CD8-positive, alpha-beta T cell (primary cell): ENCODE measurements at regions of chr11 and their contacts with region 1.

Region 1: DNA sequence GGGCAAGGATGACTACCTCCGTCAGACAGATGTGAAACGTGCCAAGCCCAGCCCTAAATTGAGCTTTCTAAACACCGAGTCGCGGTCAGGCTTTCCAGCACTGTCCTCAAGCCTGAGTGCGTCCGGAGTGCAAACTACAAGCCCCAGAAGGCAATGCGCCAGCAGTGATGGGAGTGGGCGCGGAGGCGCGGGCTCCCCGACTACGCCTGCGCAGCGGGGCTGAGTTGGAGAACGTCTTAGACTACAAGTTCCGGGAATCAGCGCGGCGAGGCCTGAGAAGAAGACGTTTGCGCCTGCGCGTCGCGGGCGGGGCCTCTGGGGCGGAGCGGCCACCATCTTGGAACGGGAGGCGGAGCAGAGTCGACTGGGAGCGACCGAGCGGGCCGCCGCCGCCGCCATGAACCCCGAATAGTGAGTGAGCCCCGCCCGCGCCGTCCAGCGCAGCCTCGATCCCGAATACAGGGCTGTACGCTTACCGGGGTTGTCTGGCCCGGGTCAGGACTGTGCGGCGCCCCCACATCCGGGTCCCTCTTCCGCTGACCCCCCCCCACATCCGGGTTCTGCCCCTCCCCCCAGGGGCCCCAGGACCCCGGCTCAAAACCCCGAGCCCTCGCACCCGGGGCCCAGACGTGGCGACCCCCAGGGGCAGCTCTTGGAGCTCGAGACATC is at the start of gene RAB1B:
- DNase-seq: peak; percentile 99 to 100 (median 100)
- ATAC-seq: peak; percentile 75
- H3K4me3 ChIP-seq: peak within 1 kb of the TSS; percentile 89 to 97
- H3K4me3 Mint-ChIP-seq: peak within 1 kb of the TSS; percentile 97
- H3K27ac ChIP-seq: peak within 1 kb of the TSS; percentile 83 to 91
- H3K27ac Mint-ChIP-seq: peak within 1 kb of the TSS; percentile 97
- H3K4me1 ChIP-seq: peaks cover 43% of the 10 kb centered on the region
- H3K4me1 Mint-ChIP-seq: peaks cover 50% of the 10 kb centered on the region
- H3K27me3 ChIP-seq: no peaks in the 10 kb centered on the region
- H3K27me3 Mint-ChIP-seq: no peaks in the 10 kb centered on the region
- CTCF ChIP-seq: no peak
- total RNA-seq, gene RAB1B: 34.4 to 36.3 TPM

Region 2: DNA sequence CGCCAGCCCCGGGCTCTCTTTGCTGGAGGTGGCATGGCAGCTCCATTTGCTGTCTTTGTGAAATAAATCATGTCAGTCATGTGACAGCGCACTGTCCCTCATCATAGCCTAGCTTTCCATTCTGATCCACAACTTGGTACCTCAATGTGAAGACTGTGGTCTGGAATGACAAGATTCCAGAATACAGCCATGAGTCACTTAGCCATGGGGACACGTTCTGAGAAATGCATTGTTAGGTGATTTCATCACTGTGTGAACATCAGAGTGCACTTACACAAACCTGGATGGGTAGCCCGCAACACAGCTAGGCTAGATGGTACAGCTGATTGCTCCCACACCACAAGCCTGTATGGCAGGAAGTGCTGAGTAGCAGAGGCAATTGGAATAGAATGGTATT is 1882.1 kb before region 1 on chr11:
- CTCF ChIA-PET with region 1: no interaction called
- POLR2A ChIA-PET with region 1: no interaction called
- intact Hi-C with region 1: no loop called
- DNase-seq: peak in 1 of 9 experiments; percentile 43
- ATAC-seq: peak; percentile 80
- H3K4me3 ChIP-seq: no peak overlapping the region
- H3K4me3 Mint-ChIP-seq: no peak overlapping the region
- H3K27ac ChIP-seq: no peak overlapping the region
- H3K27ac Mint-ChIP-seq: no peak overlapping the region
- H3K4me1 ChIP-seq: peaks cover 6% of the 10 kb centered on the region
- H3K4me1 Mint-ChIP-seq: peaks cover 31% of the 10 kb centered on the region
- H3K27me3 ChIP-seq: no peaks in the 10 kb centered on the region
- H3K27me3 Mint-ChIP-seq: no peaks in the 10 kb centered on the region
- CTCF ChIP-seq: no peak

Region 3: DNA sequence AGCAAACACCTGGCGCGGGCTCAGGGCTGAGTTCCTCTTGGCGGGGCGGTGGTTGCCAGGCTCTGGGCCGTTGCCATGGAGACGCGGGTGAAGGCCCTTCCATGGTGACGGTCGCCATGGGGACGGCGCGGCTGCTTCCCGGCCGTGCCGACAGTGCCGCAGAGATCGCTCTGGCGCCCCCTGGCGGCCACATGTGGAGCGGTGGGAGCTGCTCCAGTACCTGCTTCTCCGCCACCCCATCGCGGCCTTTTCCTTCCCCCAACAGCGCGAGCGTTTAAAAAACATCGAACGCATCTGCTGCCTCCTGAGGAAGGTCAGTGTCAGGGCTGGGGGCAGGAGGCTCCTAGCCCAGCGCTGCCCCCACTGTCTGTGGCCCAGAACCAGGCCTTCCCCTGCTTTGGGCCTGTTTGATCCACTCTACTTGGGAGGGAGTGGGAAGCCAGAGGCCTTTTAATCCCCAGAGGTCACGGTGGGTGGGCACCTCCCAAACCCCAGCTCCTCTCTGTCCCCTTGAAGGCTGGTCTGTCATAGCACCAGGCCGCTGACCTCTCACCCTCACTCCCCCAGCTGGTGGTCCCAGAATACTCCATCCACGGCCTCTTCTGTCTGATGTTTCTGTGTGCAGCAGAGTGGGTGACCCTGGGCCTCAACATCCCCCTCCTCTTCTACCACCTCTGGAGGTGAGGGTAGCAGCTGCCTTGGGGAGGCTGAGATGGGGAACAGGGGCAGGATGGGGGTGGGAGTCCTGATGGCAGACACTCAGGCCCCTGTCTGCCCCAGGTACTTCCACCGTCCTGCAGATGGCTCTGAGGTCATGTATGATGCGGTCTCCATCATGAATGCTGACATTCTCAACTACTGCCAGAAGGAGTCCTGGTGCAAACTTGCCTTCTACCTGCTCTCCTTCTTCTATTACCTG is 14.3 kb after region 1 on chr11:
- CTCF ChIA-PET with region 1: interaction called, 23 read pairs
- POLR2A ChIA-PET with region 1: interaction called, 15 read pairs
- intact Hi-C with region 1: loop called (anchors 1 kb)
- DNase-seq: peak; percentile 98 to 100 (median 99)
- ATAC-seq: peak; percentile 73
- H3K4me3 ChIP-seq: no peak overlapping the region
- H3K4me3 Mint-ChIP-seq: no peak overlapping the region
- H3K27ac ChIP-seq: peak overlapping the region in 1 of 2 experiments; percentile 59
- H3K27ac Mint-ChIP-seq: peak overlapping the region; percentile 84
- H3K4me1 ChIP-seq: peaks cover 27% of the 10 kb centered on the region
- H3K4me1 Mint-ChIP-seq: peaks cover 45% of the 10 kb centered on the region
- H3K27me3 ChIP-seq: peaks cover 0 to 5% of the 10 kb centered on the region in 2 experiments
- H3K27me3 Mint-ChIP-seq: no peaks in the 10 kb centered on the region
- CTCF ChIP-seq: peak; percentile 89

Region 4: GRCh38 chr11:66288671-66289547 is 20.5 kb after region 1 on chr11 and contains the start of gene YIF1A:
- CTCF ChIA-PET with region 1: interaction called, 4 read pairs
- POLR2A ChIA-PET with region 1: interaction called, 8 read pairs
- intact Hi-C with region 1: loop called (anchors 1 kb)
- DNase-seq: peak; percentile 96 to 99 (median 98)
- ATAC-seq: peak; percentile 90
- H3K4me3 ChIP-seq: peak within 1 kb of the TSS; percentile 67 to 80
- H3K4me3 Mint-ChIP-seq: peak within 1 kb of the TSS; percentile 82
- H3K27ac ChIP-seq: peak within 1 kb of the TSS; percentile 75 to 81
- H3K27ac Mint-ChIP-seq: peak within 1 kb of the TSS; percentile 85
- H3K4me1 ChIP-seq: peaks cover 27% of the 10 kb centered on the region
- H3K4me1 Mint-ChIP-seq: peaks cover 42% of the 10 kb centered on the region
- H3K27me3 ChIP-seq: peaks cover 16 to 17% of the 10 kb centered on the region in 2 experiments
- H3K27me3 Mint-ChIP-seq: peaks cover 13% of the 10 kb centered on the region
- CTCF ChIP-seq: no peak
- total RNA-seq, gene YIF1A: 16.8 to 17.1 TPM

Region 5: DNA sequence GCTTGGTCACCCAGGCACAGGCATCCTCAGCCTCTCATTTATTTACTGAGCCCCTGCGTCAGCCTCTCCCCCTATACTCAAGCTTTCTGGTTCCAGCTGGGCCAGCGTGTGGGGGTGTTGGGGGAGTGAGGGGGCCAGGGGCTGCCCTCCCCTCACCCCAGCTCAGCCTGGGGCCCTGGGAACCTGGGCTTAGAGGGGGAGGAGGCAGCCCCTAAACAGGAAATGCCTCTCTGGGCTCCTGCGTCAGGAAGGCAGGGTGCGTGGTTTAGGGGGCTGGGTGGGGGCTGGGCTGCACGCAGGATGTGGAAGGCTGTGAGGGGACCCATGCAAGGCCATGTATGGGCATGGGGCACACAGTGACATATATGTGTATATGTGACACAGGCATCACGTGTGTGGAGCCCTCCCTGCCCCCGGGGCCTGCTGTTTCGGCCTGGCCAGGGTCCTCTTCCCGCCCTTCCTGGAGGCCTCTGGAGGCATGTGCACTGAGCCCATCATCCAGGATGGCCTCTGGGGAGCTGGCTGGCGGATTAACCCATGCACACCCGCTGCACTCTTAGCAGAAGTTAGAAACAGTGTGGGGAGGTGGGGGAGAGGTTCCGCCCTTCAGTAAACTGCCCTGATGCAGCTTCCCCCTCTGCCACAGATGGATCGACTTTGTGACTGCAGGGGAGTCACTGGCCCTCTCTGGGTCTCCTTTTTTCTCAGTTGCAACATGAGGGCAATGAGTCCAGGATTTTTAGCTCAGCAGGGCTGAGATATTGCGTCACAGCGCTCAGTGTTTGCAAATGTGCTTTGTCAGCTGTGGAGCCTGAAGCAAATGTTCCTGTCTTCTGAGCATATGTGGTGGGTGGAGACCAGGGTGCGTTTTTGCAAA is 49.5 kb after region 1 on chr11:
- CTCF ChIA-PET with region 1: no interaction called
- POLR2A ChIA-PET with region 1: interaction called, 7 read pairs
- intact Hi-C with region 1: loop called (anchors 1 kb)
- DNase-seq: peak; percentile 67 to 98 (median 86)
- ATAC-seq: peak; percentile 85
- H3K4me3 ChIP-seq: peak overlapping the region; percentile 33 to 74
- H3K4me3 Mint-ChIP-seq: peak overlapping the region; percentile 87
- H3K27ac ChIP-seq: peak overlapping the region; percentile 92 to 98
- H3K27ac Mint-ChIP-seq: peak overlapping the region; percentile 99
- H3K4me1 ChIP-seq: peaks cover 38% of the 10 kb centered on the region
- H3K4me1 Mint-ChIP-seq: peaks cover 55% of the 10 kb centered on the region
- H3K27me3 ChIP-seq: no peaks in the 10 kb centered on the region
- H3K27me3 Mint-ChIP-seq: no peaks in the 10 kb centered on the region
- CTCF ChIP-seq: no peak

Region 6: DNA sequence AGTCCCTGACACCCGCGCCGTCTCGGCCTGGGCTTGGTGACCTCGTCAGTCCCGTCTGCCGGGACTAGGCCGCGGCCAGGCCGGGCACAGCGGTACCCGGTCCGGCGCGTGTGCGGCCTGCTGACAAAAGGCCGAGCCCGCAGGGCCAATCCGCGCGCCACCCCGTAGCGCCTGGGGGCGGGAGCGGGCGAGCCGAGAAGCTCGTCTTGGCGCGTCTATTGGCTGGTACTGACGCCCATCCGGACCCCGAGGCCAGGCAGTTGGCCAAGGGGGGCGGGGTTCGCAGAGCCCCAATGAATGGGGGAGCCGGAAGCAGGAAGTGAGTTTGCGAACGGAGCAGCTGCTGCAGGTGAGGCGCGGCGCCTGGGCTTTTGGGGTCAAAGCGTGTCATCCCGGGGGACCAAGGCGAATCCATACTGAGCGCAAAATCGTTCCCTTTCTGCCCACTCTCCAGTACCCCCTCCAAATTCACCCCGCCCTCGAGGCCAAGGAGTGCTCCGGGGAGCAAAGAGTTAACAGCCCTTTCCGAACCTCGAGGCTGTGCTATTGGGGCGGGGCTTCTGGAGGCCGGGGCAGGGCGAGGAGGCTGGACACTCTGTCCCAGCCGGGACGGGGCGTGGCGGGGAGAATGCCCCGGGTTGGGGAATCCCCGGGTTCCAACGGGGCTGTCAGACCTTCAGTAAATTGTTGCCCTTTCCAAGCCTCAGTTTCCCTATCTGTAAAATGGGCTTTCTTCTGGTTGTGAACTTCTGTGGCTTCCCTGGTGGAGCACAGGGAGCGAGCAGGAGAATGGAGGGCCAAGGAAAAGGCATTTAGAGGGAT is 211.9 kb after region 1 on chr11 and contains the start of gene DPP3:
- CTCF ChIA-PET with region 1: no interaction called
- POLR2A ChIA-PET with region 1: no interaction called
- intact Hi-C with region 1: loop called in 1 of 2 experiments (anchors 1 kb)
- DNase-seq: peak; percentile 91 to 97 (median 95)
- ATAC-seq: peak; percentile 98
- H3K4me3 ChIP-seq: peak within 1 kb of the TSS; percentile 90 to 93
- H3K4me3 Mint-ChIP-seq: peak within 1 kb of the TSS; percentile 89
- H3K27ac ChIP-seq: peak within 1 kb of the TSS; percentile 70 to 90
- H3K27ac Mint-ChIP-seq: peak within 1 kb of the TSS; percentile 89
- H3K4me1 ChIP-seq: peaks cover 17% of the 10 kb centered on the region
- H3K4me1 Mint-ChIP-seq: peaks cover 31% of the 10 kb centered on the region
- H3K27me3 ChIP-seq: no peaks in the 10 kb centered on the region
- H3K27me3 Mint-ChIP-seq: no peaks in the 10 kb centered on the region
- CTCF ChIP-seq: no peak
- total RNA-seq, gene DPP3: 13.7 to 15.6 TPM

Region 7: DNA sequence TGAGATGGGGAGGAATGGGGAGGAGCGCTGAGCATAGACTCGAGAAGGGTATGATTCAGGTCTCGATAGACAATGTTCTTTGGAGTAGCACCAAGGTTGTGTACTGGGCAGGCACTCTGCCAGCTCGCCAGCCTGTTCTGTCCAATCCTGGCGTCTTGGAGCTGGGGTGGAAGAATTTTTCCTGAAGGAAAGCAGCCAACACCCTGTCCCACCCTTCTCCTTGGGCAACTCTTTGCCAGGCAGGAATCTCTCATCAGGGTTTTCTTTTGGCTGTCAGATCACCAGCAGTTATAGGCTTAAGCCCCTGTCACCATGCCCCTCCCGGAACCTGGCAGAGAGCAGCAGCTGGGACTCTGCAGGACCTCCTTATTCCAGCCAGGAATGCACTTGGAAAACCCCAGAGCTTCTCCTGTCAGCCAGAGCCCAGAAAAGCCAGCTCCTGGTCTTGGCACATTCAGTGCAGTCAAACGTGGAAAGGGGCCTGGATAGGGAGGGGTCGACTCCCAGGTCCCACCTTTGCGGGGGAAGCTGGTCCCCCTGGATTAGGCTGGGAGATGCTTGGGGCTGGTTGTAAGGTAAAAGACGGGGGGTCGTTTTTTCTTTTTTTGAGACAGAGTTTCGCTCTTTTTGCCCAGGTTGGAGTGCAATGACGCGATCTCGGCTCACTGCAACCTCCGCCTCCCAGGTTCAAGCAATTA is 475.0 kb after region 1 on chr11:
- CTCF ChIA-PET with region 1: no interaction called
- POLR2A ChIA-PET with region 1: no interaction called
- intact Hi-C with region 1: no loop called
- DNase-seq: peak in 1 of 9 experiments; percentile 14
- ATAC-seq: no peak
- H3K4me3 ChIP-seq: no peak overlapping the region
- H3K4me3 Mint-ChIP-seq: peak overlapping the region; percentile 90
- H3K27ac ChIP-seq: no peak overlapping the region
- H3K27ac Mint-ChIP-seq: no peak overlapping the region
- H3K4me1 ChIP-seq: peaks cover 5% of the 10 kb centered on the region
- H3K4me1 Mint-ChIP-seq: peaks cover 3% of the 10 kb centered on the region
- H3K27me3 ChIP-seq: no peaks in the 10 kb centered on the region
- H3K27me3 Mint-ChIP-seq: no peaks in the 10 kb centered on the region
- CTCF ChIP-seq: no peak